Activated T-helper 2 cell treated with anti-CD3 and anti-CD28 coated beads, Interferon-gamma antibody, Interleukin-2, Interleukin-4, amounts not matched to agents 10 μg/mL and 5 μg/mL and 100 μg/mL, durations not matched to agents 14 hours and 24 hours and 36 hours (primary cell): ENCODE measurements at regions of chr1 and their contacts with region 1.

Region 1: GRCh38 chr1:212727386-212728181 is 27.9 kb upstream of the BATF3 start:
- DNase-seq: no peak
- H3K4me3 Mint-ChIP-seq: no peak overlapping the region
- H3K27ac Mint-ChIP-seq: peak overlapping the region; percentile 91
- H3K4me1 Mint-ChIP-seq: peaks cover 52% of the 10 kb centered on the region
- H3K27me3 Mint-ChIP-seq: no peaks in the 10 kb centered on the region

Region 2: DNA sequence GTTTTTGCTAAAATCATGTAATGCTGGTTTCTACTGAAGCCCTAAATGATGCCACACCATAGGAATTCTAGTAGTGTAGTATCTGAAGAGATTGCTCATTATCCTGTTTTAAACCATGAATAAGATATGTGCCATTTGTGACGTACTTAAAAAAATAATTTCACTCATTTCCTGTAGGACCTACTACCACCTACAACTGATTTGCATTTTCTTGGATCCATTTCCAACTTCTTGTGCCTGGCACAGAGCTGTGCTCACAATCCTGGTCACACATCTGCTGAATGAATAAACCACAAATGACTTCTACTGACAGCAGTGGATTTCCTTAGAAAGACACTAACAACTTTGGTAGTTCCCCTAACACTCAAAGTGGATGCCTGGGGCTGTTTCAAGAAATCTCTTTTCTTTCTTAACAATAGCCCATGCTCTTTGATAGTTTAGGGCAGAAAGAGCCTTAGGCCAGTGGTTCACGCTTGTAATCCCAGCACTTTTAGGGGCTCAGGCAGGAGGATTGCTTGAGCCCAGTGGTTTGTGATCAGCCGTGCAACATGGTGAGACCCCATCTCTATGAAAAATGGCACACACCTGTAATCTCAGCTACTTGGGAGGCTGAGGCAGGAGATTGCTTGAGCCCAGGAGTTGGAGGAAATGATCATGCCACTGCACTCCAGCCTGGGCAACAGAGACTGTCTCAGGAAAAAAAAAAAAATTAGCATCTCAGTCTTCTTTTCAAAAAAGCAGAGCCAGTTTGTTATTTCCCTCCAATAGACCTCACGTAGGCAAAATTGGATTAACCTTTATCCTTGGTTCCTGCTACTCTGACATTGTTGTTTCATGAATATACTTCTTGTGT is 14.9 kb before region 1 on chr1:
- intact Hi-C with region 1: loop called (anchors 2 kb)
- DNase-seq: no peak
- H3K4me3 Mint-ChIP-seq: peak overlapping the region; percentile 27
- H3K27ac Mint-ChIP-seq: peak overlapping the region; percentile 91
- H3K4me1 Mint-ChIP-seq: peaks cover 44% of the 10 kb centered on the region
- H3K27me3 Mint-ChIP-seq: no peaks in the 10 kb centered on the region

Region 3: DNA sequence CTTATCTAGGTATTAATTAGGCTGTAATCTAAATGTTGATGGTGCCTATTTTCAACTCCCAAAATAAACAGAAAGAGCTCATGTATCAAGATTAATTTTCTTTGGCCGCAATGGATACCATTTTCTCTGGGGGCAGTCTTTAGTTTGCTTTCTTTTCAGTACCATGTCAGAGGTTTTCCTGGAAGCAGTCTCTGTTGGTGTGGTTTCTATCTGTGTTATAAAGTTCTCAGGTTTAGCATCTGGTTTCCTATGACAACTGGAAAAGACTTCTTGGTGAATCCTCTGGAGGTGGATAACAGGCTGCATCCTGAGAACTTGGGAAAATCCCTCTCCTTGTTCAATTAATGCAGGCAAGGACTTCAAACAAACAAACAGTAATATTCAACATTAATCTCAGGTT is 10.7 kb after region 1 on chr1:
- intact Hi-C with region 1: loop called (anchors 1 kb)
- DNase-seq: no peak
- H3K4me3 Mint-ChIP-seq: no peak overlapping the region
- H3K27ac Mint-ChIP-seq: peak overlapping the region; percentile 88
- H3K4me1 Mint-ChIP-seq: peaks cover 40% of the 10 kb centered on the region
- H3K27me3 Mint-ChIP-seq: no peaks in the 10 kb centered on the region